ENCODE measurements at regions of chr19 and their contacts with region 1.

Region 1: DNA sequence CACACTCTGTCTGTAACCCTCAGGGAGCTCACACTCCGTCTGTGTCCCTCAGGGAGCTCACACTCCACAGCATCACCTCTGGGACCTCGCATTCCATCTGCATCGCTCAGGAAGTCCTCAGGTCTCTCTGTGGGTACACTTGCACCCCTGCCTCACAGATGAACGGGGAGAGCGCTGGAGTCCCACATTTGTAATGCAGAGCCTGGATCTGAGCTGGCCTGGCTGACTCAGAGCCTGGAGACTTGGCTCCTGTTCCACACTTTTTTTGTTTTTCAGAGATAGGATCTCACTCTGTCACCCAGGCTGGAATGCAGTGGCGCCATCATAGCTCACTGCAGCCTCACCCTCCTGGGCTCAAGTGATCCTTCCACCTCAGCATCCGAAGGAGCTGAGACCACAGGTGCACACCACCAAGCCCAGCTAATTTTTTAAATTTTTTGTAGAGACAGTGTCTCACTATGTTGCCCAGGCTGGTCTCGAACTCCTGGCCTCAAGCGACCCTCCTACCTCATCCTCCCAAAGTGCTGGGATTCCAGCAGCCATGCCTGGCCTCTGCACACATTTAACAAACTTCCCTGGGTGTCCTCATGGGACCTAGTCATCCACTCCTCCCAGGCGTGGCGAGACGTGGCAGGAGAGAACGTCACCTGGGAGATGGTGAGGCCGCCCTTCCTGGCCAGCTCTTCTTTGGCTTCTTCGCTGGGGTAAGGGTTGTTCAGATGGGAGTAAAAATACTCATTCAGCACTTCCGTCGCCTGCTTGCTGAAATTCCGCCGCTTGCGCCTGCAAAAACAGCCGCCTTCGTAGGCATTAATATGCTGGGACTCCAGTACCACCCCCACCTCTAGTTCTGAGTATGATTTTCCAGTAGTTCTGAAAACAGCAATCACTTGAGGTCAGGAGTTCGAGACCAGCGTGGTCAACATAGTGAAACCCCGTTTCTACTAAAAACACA is 31.0 kb downstream of the CILP2 start:
- DNase-seq: no peak

Region 2: GRCh38 chr19:19224852-19225494 is 344.1 kb before region 1 on chr19:
- intact Hi-C with region 1: no loop called
- DNase-seq: peak in 1 of 10 donors; percentile 85

Region 3: GRCh38 chr19:19588546-19588945 is 19.5 kb after region 1 on chr19:
- intact Hi-C with region 1: loop called (anchors 1 kb)
- DNase-seq: no peak

Measured in posterior cingulate gyrus (tissue), 11 donors.